BJ (cell line): ENCODE measurements at regions of chr19 and their contacts with region 1.

Region 1: GRCh38 chr19:54023191-54023590 is 31.8 kb downstream of the CACNG6 start:
- DNase-seq: no peak
- H3K4me3 ChIP-seq: no peak overlapping the region
- H3K27me3 ChIP-seq: no peaks in the 10 kb centered on the region
- CTCF ChIP-seq: no peak

Region 2: GRCh38 chr19:53844849-53845246 is 178.3 kb before region 1 on chr19:
- CTCF ChIA-PET with region 1: interaction called, 37 read pairs
- POLR2A ChIA-PET with region 1: no interaction called
- DNase-seq: no peak
- H3K4me3 ChIP-seq: no peak overlapping the region
- H3K27me3 ChIP-seq: no peaks in the 10 kb centered on the region
- CTCF ChIP-seq: no peak

Region 3: DNA sequence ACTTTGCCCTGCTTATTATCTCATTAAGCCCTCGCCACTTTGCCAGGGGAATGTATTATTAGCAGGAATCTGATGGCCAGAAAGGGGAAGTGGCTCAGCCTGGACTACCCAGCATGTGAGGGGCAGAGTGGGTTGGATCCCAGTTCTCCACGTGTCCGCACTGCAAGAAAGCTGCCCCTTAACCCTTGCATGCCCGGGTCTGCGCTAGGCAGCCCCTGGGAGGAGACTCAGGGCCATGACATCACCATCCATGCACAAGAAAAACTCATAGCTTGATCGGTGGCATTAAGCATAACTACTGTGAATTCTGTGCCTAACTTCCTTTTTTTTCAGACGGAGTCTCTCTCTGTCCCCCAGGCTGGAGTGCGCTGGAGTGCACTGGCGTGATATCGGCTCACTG is 51.5 kb before region 1 on chr19:
- CTCF ChIA-PET with region 1: no interaction called
- POLR2A ChIA-PET with region 1: no interaction called
- DNase-seq: no peak
- H3K4me3 ChIP-seq: no peak overlapping the region
- H3K27me3 ChIP-seq: no peaks in the 10 kb centered on the region; the same call in 1 of the 2 replicates
- CTCF ChIP-seq: no peak

Region 4: GRCh38 chr19:54009440-54009839 is 13.8 kb before region 1 on chr19:
- CTCF ChIA-PET with region 1: interaction called, 13 read pairs
- POLR2A ChIA-PET with region 1: no interaction called
- DNase-seq: no peak
- H3K4me3 ChIP-seq: no peak overlapping the region
- H3K27me3 ChIP-seq: no peaks in the 10 kb centered on the region
- CTCF ChIP-seq: no peak

Region 5: GRCh38 chr19:54041969-54042606 is 18.9 kb after region 1 on chr19:
- CTCF ChIA-PET with region 1: interaction called, 17 read pairs
- POLR2A ChIA-PET with region 1: no interaction called
- DNase-seq: no peak
- H3K4me3 ChIP-seq: no peak overlapping the region
- H3K27me3 ChIP-seq: no peaks in the 10 kb centered on the region
- CTCF ChIP-seq: no peak

Region 6: GRCh38 chr19:54063350-54064116 is 40.3 kb after region 1 on chr19 and contains the start of gene VSTM1:
- CTCF ChIA-PET with region 1: no interaction called
- POLR2A ChIA-PET with region 1: no interaction called
- DNase-seq: no peak
- H3K4me3 ChIP-seq: no peak within 1 kb of the TSS
- H3K27me3 ChIP-seq: no peaks in the 10 kb centered on the region
- CTCF ChIP-seq: no peak
- polyA plus RNA-seq, gene VSTM1: not detected in 2 replicates

Region 7: DNA sequence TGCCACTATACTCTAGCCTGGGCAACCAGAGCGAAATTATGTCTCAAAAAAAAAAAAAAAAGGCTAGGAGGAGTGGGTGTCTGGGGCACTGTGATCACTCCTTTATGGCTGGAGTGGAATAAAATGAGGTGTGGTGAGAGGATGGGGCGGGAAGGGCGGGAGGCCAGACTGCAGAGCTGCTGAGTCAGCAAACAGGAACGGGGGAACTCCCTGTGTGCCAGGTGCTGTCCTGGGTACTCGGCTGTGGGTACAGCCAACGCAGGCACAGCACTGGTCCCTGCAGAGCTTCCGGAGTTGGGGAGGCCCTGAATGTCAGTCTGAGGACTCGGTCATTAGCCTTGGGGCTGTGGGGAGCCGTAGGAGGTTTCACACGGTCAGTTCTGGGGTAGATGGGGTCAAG is 98.1 kb after region 1 on chr19:
- CTCF ChIA-PET with region 1: no interaction called
- POLR2A ChIA-PET with region 1: no interaction called
- DNase-seq: no peak
- H3K4me3 ChIP-seq: no peak overlapping the region
- H3K27me3 ChIP-seq: no peaks in the 10 kb centered on the region
- CTCF ChIP-seq: no peak

Region 8: DNA sequence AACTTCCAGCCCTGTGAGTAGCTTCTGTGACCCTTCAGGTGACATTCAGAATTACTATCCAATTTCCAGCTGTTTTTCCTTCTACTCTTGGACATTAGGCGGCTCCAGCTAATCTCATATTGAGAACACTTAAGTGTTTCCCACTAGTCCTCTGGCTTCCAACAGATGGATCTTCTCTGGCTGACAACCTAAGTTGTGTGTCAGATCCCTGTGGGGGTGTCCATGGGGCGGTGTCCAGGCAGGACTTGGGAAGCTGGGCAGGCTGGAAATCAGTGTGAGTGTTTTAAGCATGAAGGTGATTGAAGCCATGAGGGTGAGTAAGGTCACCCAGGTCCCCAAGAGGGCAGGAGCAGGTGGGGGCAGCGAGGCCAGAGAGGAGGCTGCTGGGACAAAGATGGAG is 124.5 kb after region 1 on chr19:
- CTCF ChIA-PET with region 1: no interaction called
- POLR2A ChIA-PET with region 1: no interaction called
- DNase-seq: no peak
- H3K4me3 ChIP-seq: no peak overlapping the region
- H3K27me3 ChIP-seq: no peaks in the 10 kb centered on the region
- CTCF ChIP-seq: no peak